Activated T-helper 2 cell treated with anti-CD3 and anti-CD28 coated beads, Interferon-gamma antibody, Interleukin-2, Interleukin-4, amounts not matched to agents 10 μg/mL and 5 μg/mL and 100 μg/mL, durations not matched to agents 14 hours and 24 hours and 36 hours (primary cell): ENCODE measurements at regions of chr6 and their contacts with region 1.

Region 1: GRCh38 chr6:119463081-119463626 is 113.6 kb upstream of the MAN1A1 start:
- DNase-seq: peak; percentile 37
- H3K4me3 Mint-ChIP-seq: peak overlapping the region; percentile 11
- H3K27ac Mint-ChIP-seq: peak overlapping the region; percentile 84
- H3K4me1 Mint-ChIP-seq: peaks cover 65% of the 10 kb centered on the region
- H3K27me3 Mint-ChIP-seq: no peaks in the 10 kb centered on the region

Region 2: DNA sequence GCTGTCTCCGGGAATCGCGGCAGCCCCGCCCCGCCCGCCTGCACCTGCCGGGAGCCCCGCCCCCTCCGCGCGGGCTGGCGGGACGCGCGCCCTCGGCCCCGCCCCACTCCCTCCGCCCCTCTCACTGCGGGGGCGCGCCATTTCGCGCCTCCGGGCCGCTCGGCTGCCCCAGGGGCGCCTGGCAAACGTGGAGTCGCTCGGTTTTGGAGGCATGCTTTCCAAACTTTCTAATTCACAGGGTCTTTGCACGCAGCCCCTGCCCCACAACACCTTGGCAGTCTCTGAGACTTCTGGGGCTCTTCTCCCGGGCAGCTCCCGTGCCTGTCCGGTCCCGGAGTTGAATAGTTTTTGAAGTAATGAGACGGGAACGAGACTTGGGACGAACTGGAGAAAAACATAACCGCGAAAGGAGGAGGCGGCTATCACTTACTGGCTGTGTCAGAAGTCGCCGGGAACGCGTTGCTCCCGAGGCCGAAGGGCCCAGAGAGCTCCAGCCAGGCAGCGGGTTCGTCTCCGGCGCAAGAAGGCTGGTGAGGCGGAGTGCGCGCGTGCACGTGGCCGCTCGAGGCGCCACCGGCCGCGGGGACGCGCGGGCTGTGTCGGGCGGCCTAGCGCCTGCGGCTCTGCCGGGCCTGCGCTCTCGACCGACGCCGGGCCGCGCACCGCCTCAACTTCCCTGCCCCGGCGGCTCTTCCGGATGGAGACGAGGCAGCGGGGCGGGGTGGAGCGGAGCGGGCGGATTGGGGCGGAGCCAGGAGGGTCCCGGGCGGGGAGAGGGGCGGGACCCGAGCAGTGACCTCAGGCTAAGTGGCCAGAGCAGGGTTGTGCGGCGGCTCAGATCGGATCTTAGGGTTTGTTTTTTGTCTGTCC is 528.5 kb before region 1 on chr6 and contains the start of gene MCM9:
- intact Hi-C with region 1: loop called (anchors 5 kb)
- DNase-seq: peak; percentile 84
- H3K4me3 Mint-ChIP-seq: peak within 1 kb of the TSS; percentile 89
- H3K27ac Mint-ChIP-seq: peak within 1 kb of the TSS; percentile 96
- H3K4me1 Mint-ChIP-seq: peaks cover 29% of the 10 kb centered on the region
- H3K27me3 Mint-ChIP-seq: no peaks in the 10 kb centered on the region
- total RNA-seq, gene MCM9: 18.6 and 21.1 TPM in 2 replicates

Region 3: GRCh38 chr6:119446115-119446554 is 17.0 kb before region 1 on chr6:
- intact Hi-C with region 1: loop called (anchors 2 kb)
- DNase-seq: no peak
- H3K4me3 Mint-ChIP-seq: no peak overlapping the region
- H3K27ac Mint-ChIP-seq: peak overlapping the region; percentile 5
- H3K4me1 Mint-ChIP-seq: peaks cover 49% of the 10 kb centered on the region
- H3K27me3 Mint-ChIP-seq: peaks cover 2% of the 10 kb centered on the region

Region 4: DNA sequence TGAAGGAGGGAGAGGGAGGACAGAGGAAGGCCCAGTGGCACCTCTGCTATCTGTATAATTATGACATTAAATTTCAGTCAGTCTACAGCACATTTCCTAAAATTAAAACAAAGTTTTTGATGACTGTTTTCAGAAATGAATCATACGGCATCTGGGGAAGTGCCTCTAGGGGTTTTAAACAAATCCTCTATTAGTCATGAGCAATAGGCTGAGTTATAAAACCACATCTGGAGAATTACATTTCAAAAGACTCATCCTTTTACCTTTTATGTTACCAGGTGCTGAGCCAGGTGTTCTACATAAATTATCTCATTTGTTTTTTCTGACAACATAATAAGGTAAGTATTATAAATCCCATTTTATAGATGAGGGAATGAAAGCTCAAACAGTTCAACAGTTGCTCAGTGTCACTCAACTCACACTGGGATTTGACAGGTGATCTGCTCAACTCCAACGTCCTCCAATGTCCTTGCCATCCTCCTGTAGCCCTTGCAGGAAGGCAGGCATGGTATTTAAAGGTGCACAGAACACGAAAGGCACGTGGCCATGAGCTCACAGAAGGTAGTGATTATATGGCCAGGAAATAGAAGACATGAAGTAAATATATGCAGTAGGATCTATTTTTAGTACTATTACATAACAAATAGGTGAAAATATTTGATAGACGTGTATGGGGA is 70.6 kb after region 1 on chr6:
- intact Hi-C with region 1: loop called (anchors 2 kb)
- DNase-seq: no peak
- H3K4me3 Mint-ChIP-seq: no peak overlapping the region
- H3K27ac Mint-ChIP-seq: no peak overlapping the region
- H3K4me1 Mint-ChIP-seq: peaks cover 11% of the 10 kb centered on the region
- H3K27me3 Mint-ChIP-seq: peaks cover 18% of the 10 kb centered on the region